ENCODE measurements at regions of chr11 and their contacts with region 1.

Region 1: DNA sequence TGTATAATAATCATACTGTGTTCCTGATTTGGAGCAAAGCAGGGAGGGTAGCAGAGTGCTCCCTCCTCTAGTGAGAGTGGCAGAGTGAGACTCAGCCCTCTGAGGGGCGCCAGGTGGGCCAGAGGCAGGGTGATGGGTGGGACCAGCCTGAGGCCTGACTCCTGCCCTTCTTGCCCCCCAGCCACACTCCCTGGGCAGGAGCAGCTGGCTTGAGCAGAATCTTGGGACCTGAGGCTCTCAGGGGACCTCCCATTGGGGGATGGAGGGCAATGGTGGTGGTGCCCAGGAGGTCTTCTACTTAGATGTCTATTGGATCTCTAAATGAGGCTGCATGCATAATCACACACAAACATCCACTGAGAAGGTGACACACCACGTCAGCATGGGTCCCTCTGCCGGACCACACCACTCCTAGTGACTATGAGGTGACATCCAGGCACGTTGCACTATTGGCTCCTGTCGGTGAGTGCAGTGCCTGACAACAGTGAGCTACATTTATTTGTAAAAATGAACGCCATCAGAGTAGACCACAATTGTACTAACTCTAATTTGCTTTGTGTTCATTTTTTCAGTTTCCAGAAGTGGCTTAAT is 2.2 kb upstream of the APOA4 start:
- DNase-seq: no peak
- ATAC-seq: no peak
- H3K4me3 ChIP-seq: no peak overlapping the region
- H3K27ac ChIP-seq: no peak overlapping the region
- H3K4me1 ChIP-seq: no peaks in the 10 kb centered on the region
- H3K27me3 ChIP-seq: no peaks in the 10 kb centered on the region
- CTCF ChIP-seq: no peak

Region 2: GRCh38 chr11:116963813-116964212 is 138.5 kb after region 1 on chr11:
- CTCF ChIA-PET with region 1: no interaction called
- POLR2A ChIA-PET with region 1: interaction called, 11 read pairs
- in situ Hi-C with region 1: no loop called
- intact Hi-C with region 1: no loop called
- DNase-seq: no peak
- ATAC-seq: no peak
- H3K4me3 ChIP-seq: no peak overlapping the region
- H3K27ac ChIP-seq: no peak overlapping the region
- H3K4me1 ChIP-seq: peaks cover 17% of the 10 kb centered on the region
- H3K27me3 ChIP-seq: no peaks in the 10 kb centered on the region
- CTCF ChIP-seq: no peak